ENCODE measurements at regions of chr2 and their contacts with region 1.

Region 1: DNA sequence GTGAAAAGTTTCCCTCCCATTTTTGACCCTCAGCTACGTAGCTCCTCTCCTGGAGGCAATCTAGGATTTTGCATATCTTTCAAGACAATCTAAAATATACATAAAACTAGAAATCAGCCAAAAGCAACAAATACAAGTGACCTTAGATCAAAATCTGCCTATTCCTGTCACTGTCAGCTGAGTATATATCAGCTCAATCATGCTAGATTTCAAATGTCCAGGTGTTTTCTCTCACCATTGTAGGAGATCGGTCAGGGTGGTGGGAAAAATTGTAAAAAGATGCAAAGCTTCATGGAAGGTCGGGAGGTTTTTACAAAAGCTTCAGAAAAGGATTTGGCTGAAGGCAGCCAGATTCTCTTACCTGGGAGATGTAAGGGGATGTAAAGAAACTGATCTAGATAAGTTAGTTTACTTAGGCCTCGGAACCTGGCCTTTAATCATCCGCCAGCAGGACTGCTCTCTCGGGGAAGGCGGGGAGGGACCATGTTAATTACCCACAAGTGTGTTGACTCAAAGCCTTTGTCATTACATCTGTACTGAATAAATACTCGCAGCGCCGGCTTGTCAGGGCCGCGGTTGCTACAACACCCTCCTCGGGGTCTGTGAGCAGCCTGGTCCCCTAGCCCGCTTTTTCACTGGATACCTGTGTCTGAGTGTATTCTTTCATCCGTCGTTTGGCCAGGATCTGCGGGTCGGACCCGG is 6.9 kb downstream of the CHMP3 start:
- DNase-seq: no peak
- ATAC-seq: no peak
- H3K4me3 ChIP-seq: no peak overlapping the region
- H3K4me3 Mint-ChIP-seq: no peak overlapping the region
- H3K27ac ChIP-seq: no peak overlapping the region
- H3K27ac Mint-ChIP-seq: no peak overlapping the region
- H3K4me1 ChIP-seq: peaks cover 19 to 30% of the 10 kb centered on the region in 2 experiments
- H3K4me1 Mint-ChIP-seq: peaks cover 37 to 50% (median 49%) of the 10 kb centered on the region in 3 donors
- H3K27me3 ChIP-seq: no peaks in the 10 kb centered on the region
- H3K27me3 Mint-ChIP-seq: no peaks in the 10 kb centered on the region

Region 2: DNA sequence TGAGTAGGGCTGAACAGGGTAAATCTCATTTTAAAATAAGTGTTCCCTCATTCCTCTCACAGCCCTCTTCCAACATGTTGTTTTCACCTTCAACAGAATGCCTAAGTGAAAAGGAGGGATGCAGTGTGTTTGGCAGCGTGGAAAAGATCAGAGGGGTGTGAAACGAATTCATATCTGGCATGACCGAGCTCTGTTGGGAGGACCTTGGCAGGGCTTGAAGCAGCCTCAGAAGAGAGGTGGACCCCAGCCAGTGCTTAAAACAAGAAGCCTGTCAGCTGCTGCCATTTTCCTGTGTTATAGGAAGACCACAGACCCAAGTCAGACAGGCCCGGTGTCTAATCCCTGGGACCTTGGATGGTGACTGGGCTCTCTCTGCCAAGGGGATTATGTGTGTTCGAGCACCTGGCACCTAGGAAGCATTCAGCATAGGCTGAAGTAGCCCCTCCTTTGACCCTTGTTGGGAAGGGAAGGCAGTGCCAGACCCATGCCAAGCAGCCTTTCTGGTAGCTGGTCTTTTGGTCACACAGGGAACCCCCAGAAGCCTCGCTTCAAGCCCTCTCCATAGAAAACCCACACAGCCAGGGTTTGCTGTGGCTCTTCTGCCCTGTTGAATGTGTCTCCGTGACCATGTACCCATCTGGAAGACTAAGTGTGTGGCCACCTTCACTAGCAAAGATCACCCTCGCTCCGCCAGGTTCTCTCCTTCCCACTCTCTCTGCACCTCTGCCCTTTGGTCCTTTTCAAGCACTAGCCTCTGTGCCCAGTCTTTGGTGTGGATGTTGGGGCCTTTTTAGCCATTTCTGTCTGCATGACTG is 580.0 kb before region 1 on chr2:
- CTCF ChIA-PET with region 1: no interaction called
- POLR2A ChIA-PET with region 1: no interaction called
- DNase-seq: no peak
- ATAC-seq: no peak
- H3K4me3 ChIP-seq: no peak overlapping the region
- H3K4me3 Mint-ChIP-seq: no peak overlapping the region
- H3K27ac ChIP-seq: no peak overlapping the region
- H3K27ac Mint-ChIP-seq: no peak overlapping the region
- H3K4me1 ChIP-seq: no peaks in the 10 kb centered on the region
- H3K4me1 Mint-ChIP-seq: peaks cover 0 to 5% (median 2%) of the 10 kb centered on the region in 3 donors
- H3K27me3 ChIP-seq: no peaks in the 10 kb centered on the region
- H3K27me3 Mint-ChIP-seq: no peaks in the 10 kb centered on the region

Region 3: DNA sequence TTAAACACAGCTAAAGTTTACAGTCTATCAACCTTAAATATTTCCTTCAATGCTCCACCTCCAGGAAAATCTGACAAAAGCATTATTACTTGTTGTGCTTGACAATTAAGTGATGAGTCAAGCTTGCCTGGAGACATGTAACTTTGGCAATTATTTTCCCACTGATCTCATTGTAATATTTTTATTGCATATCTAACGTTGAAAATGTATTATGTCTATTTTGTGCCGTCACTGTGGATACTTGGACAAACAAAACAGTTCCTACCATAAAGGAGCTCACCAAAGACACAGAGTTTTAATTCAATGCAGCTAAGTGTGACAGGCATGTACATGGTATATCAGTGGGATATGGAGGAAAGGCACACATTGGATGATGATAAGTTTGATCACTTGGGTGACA is 42.6 kb after region 1 on chr2:
- CTCF ChIA-PET with region 1: no interaction called
- POLR2A ChIA-PET with region 1: interaction called in 1 of 2 experiments, 12 read pairs
- DNase-seq: no peak
- ATAC-seq: no peak
- H3K4me3 ChIP-seq: no peak overlapping the region
- H3K4me3 Mint-ChIP-seq: no peak overlapping the region
- H3K27ac ChIP-seq: no peak overlapping the region
- H3K27ac Mint-ChIP-seq: no peak overlapping the region
- H3K4me1 ChIP-seq: no peaks in the 10 kb centered on the region
- H3K4me1 Mint-ChIP-seq: no peaks in the 10 kb centered on the region
- H3K27me3 ChIP-seq: no peaks in the 10 kb centered on the region
- H3K27me3 Mint-ChIP-seq: peaks cover 0 to 4% of the 10 kb centered on the region in 2 donors

Measured in T-cell (primary cell).